ENCODE measurements at regions of chr11 and their contacts with region 1.

Region 1: GRCh38 chr11:118171269-118172062 is 5.0 kb downstream of the SCN2B start:
- DNase-seq: peak; percentile 73
- H3K4me3 Mint-ChIP-seq: no peak overlapping the region
- H3K27ac Mint-ChIP-seq: no peak overlapping the region
- H3K4me1 Mint-ChIP-seq: peaks cover 2% of the 10 kb centered on the region
- H3K27me3 Mint-ChIP-seq: peaks cover 28% of the 10 kb centered on the region

Region 2: GRCh38 chr11:118145285-118146227 is 25.9 kb before region 1 on chr11:
- CTCF ChIA-PET with region 1: interaction called, 47 read pairs
- POLR2A ChIA-PET with region 1: interaction called, 3 read pairs
- DNase-seq: peak; percentile 91
- H3K4me3 Mint-ChIP-seq: peak overlapping the region; percentile 76
- H3K27ac Mint-ChIP-seq: no peak overlapping the region
- H3K4me1 Mint-ChIP-seq: peaks cover 7% of the 10 kb centered on the region
- H3K27me3 Mint-ChIP-seq: peaks cover 76% of the 10 kb centered on the region

Region 3: DNA sequence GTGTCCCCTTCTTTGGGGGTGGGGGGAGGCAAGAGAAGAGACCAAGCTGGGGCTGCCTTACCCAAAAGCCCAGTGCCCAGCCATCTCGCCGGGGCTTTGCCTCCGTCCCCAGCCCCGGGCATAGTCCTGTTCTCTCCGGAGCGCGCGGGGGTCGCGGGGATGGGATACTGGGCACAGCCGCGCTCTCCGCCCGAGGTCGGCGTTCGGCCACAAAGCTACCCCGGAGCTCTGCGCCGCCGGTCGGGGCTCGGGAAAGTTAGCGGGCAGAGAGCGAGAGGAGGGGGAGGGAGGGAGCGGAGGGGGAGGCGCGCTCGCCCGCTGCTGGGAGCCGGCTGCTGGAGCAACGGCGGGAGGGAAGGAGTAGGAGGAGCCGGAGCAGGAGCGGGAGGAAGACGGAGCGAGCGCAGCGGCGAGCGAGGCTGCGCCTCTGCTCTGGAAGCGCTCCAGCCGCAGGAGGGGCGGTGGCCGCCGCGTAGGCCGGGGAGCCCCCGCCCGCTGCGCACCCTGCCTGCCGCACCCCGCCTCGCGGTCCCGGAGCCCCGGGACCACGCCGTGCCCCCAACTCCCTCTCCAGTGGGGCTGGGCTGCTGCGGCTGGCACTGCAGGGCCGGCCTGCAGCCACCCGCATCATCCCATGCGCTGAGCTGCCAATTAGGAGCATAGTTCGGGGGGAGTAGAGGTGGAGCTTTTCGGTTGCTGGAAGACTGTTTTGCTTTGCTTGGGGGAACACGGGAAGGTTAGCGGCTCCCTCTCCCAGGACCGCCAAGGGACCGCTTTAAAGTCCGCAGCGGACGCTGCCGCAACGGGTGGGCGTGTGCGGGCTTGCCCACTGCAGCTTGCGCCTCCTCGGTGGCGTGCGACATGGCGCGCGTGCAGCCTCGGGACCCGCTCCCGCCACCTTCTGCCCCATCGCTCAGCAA is 18.7 kb before region 1 on chr11 and contains the start of gene SCN4B:
- CTCF ChIA-PET with region 1: interaction called, 25 read pairs
- POLR2A ChIA-PET with region 1: interaction called, 4 read pairs
- DNase-seq: no peak
- H3K4me3 Mint-ChIP-seq: peak within 1 kb of the TSS; percentile 35
- H3K27ac Mint-ChIP-seq: no peak within 1 kb of the TSS
- H3K4me1 Mint-ChIP-seq: peaks cover 9% of the 10 kb centered on the region
- H3K27me3 Mint-ChIP-seq: peaks cover 89% of the 10 kb centered on the region
- total RNA-seq, gene SCN4B: 0.28 TPM in 1 of 2 experiments, not detected in the other

Region 4: GRCh38 chr11:118290923-118291322 is 119.5 kb after region 1 on chr11:
- CTCF ChIA-PET with region 1: interaction called, 11 read pairs
- POLR2A ChIA-PET with region 1: no interaction called
- DNase-seq: peak; percentile 54
- H3K4me3 Mint-ChIP-seq: no peak overlapping the region
- H3K27ac Mint-ChIP-seq: no peak overlapping the region
- H3K4me1 Mint-ChIP-seq: peaks cover 22% of the 10 kb centered on the region
- H3K27me3 Mint-ChIP-seq: peaks cover 3% of the 10 kb centered on the region